Ovary (tissue), 10 donors: ENCODE measurements at regions of chr15 and their contacts with region 1.

Region 1: GRCh38 chr15:85625856-85626255 is 168.9 kb downstream of the KLHL25 start:
- DNase-seq: no peak
- H3K4me3 ChIP-seq: no peak overlapping the region
- H3K27ac ChIP-seq: no peak overlapping the region
- H3K4me1 ChIP-seq: peaks cover 20% of the 10 kb centered on the region
- H3K27me3 ChIP-seq: no peaks in the 10 kb centered on the region
- CTCF ChIP-seq: no peak
- EP300 ChIP-seq: no peak
- POLR2A ChIP-seq: no peak

Region 2: DNA sequence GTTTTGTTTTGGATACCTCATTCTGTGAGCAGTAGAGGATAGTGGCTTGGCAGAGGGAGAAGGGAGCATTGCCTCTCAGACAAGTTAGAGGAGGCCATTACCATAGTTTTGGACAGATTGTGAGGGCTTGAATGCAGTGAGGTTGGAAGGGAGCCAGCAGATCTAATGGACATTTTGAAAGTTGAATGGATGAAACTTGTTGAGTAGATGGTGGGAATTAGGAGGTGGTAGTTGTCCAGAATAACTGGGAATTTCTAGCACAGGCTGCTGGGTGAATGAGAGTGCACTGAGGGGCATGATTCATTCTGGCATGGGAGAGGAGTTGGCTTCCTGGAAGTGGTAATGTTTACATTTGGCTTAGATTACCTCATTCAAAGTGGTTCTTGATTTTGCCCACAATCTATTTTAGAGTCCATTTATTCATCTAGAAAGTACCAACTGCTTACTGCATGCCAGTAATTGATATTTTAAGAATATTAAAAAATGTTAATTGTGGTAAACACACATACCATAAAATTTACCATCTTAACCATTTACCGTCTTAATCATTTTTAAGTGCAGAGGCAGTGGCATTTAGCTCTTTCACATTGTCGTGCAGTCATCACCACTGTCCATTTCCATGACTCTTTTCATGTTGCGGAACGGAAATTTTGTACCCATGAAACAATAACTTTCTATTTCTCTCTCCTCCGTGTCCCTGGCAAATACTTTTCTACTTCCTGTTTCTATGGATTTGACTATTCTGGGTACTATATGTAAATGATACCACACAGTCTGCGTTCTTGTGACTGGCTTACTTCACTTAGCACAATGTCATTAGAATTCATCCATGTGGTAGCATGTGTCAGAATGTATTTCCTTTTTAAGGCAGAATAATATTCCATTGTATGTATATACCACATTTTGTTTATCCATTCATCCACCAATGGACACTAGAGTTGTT is 217.8 kb before region 1 on chr15:
- intact Hi-C with region 1: no loop called
- DNase-seq: peak in 1 of 5 donors; percentile 9
- H3K4me3 ChIP-seq: no peak overlapping the region
- H3K27ac ChIP-seq: no peak overlapping the region
- H3K4me1 ChIP-seq: peaks cover 15% of the 10 kb centered on the region
- H3K27me3 ChIP-seq: no peaks in the 10 kb centered on the region
- CTCF ChIP-seq: no peak
- EP300 ChIP-seq: no peak
- POLR2A ChIP-seq: no peak

Region 3: DNA sequence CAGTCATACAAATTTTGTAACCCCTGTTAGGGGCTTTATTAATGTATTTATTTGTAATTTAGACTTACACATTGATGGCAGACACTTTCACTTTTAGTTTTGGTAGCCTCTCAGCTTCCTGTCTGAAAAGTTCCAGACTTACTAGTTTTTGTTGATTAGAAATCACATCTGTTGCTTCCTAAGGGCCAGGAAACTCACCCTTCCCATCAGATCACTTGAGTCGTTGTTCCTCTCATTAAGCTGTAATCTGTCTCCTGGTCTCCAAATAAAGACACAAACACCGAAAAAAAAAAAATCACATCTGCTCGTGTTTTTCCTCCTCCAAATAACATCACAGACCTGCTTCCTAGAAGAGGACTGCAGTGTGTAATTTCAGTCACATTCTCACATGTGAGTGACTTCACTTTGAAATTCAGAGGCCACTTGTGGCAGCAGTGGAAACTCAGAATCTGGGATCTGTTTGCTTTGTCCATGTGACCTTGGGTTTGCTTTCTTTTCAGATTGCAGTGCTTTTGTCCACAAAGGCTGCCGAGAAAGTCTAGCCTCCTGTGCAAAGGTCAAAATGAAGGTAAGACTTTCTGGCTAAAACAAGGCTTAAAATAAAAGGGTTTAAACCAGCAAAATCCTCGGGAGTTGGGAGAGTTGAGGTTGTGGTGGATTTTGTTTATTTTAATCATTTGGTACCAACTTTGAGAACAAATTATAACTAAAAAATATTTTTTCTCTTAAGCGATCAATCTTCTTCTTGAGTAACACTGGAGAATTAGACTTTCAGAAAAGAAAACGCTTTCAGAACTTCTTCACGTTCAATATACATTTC is 81.9 kb after region 1 on chr15:
- intact Hi-C with region 1: loop called in 1 of 4 experiments (anchors 10 kb)
- DNase-seq: no peak
- H3K4me3 ChIP-seq: no peak overlapping the region
- H3K27ac ChIP-seq: peak overlapping the region; percentile 82 to 92
- H3K4me1 ChIP-seq: peaks cover 20% of the 10 kb centered on the region
- H3K27me3 ChIP-seq: no peaks in the 10 kb centered on the region
- CTCF ChIP-seq: no peak
- EP300 ChIP-seq: no peak
- POLR2A ChIP-seq: no peak

Region 4: GRCh38 chr15:86106306-86106705 is 480.4 kb after region 1 on chr15:
- intact Hi-C with region 1: no loop called
- DNase-seq: no peak
- H3K4me3 ChIP-seq: no peak overlapping the region
- H3K27ac ChIP-seq: no peak overlapping the region
- H3K4me1 ChIP-seq: no peaks in the 10 kb centered on the region
- H3K27me3 ChIP-seq: no peaks in the 10 kb centered on the region
- CTCF ChIP-seq: no peak
- EP300 ChIP-seq: no peak
- POLR2A ChIP-seq: no peak